Heart right ventricle (tissue), 16 donors: ENCODE measurements at regions of chr12 and their contacts with region 1.

Region 1: DNA sequence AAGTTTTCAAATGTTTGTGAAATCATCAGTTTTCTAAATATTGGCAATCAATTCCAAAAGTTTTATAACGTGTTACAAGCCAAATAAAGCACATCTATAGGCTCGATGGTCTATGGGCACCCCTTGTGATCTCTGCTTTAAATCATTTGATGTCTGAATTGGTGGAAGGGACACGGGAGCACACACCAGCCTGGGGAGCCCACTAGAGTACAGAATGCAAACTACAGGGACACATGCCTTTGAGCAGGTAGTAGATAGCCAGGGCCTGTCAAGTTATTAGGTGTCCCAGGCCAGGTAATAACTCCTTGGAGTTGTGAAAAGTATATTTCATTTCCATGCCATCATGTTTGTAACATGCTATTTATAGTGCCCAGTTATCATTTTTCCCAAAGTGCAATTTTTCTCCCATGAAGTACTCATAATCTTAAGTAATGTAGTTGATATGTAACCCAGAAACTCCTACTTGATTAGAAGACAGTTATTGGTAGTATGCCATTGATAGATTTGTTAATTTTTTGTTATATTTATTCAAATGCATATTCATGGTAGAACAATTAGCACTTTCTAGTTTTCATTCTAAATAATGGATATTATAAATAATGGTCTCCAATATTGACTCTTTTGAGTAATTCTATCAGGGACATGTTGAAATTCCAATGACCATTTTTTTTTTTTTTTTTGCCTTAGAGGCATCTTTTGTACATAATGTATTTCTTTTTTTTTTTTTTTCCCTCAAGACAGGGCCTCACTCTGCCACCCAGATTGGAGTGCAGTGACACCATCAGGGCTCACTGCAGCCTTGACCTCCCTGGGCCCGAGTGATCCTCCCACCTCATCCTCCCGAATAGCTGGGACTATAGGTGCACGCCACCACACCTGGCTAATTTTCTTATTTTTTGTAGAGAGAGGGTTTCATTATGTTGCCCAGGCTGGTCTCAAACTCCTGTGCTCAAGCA is 96.9 kb upstream of the FGD4 start:
- DNase-seq: no peak
- ATAC-seq: peak in 7 of 8 donors; percentile 52 to 73 (median 61)
- H3K4me3 ChIP-seq: no peak overlapping the region
- H3K27ac ChIP-seq: no peak overlapping the region
- H3K4me1 ChIP-seq: peaks cover 0 to 5% (median 0%) of the 10 kb centered on the region in 9 donors
- H3K27me3 ChIP-seq: no peaks in the 10 kb centered on the region
- CTCF ChIP-seq: peak in 7 of 9 donors; percentile 15 to 62 (median 45)

Region 2: DNA sequence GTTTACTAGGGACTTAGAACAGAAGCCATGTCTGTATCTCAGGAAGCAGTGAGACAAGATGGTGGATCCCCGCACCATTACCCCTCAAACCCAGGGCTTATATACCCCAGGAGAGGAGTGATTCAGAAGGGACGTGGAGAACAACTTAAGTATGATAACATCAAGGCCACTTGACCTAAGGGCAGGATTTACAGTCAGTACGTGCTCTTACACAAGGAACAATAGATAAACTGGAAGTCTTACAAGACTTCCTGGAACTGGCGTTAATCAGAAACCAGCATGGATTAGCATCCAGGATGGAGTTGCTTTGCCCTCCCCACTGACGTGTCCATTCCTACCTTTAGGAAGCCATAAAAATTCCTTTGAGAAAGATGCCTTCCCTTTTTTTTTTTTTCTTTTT is 651.6 kb before region 1 on chr12:
- intact Hi-C with region 1: loop called in 2 of 10 experiments (anchors 5 kb)
- DNase-seq: no peak
- ATAC-seq: peak in 5 of 8 donors; percentile 32 to 67 (median 47)
- H3K4me3 ChIP-seq: no peak overlapping the region
- H3K27ac ChIP-seq: peak overlapping the region in 5 of 10 donors; percentile 2 to 60 (median 25)
- H3K4me1 ChIP-seq: peaks cover 0 to 25% (median 10%) of the 10 kb centered on the region in 9 donors
- H3K27me3 ChIP-seq: no peaks in the 10 kb centered on the region
- CTCF ChIP-seq: no peak

Region 3: DNA sequence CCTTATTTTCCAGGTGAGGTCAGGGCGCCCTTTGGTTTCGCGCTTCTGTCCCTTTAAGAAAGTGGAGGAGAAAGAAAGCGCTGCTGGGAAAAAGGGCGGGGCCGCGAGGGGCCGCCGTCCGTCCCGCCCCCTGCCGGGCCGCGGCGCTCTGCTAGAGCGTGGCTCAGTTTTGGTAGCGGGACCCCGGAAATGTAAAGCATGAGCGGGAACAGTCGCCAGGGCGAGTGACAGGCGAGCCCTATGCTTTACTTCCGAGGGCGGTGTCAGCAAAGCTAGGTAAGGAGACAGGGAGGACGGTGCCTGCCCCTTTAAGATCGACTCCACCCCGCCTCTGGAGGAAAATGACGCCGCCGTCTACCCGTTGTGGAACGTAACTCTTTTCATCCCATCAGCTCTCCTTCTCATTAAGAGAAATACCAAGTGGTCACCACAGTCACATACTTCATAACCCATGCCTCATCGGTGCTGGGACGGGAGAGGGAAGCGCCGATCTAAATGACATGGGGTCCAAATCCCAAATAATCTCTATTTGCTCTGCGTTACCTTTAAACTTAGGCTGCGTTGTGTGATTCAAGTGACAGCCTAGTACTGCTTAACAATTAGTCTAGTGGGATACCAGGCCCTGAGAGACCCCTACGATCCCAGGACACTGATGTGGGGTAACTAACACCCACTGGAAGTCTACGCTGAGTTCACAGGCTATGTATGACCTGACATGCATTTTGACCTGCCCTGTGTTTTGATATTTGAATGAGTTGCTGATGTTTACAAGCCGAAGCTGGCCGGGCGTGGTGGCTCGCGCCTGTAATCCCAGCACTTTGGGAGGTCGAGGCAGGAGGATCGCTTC is 643.2 kb before region 1 on chr12 and contains the start of gene ETFBKMT:
- intact Hi-C with region 1: loop called in 2 of 10 experiments (anchors 5 kb)
- DNase-seq: peak; percentile 84 to 89
- ATAC-seq: peak; percentile 93 to 97 (median 96)
- H3K4me3 ChIP-seq: peak within 1 kb of the TSS; percentile 30 to 78 (median 67)
- H3K27ac ChIP-seq: peak within 1 kb of the TSS; percentile 83 to 98 (median 94)
- H3K4me1 ChIP-seq: peaks cover 0 to 19% (median 11%) of the 10 kb centered on the region in 9 donors
- H3K27me3 ChIP-seq: no peaks in the 10 kb centered on the region
- CTCF ChIP-seq: peak in 8 of 9 donors; percentile 23 to 74 (median 50)
- total RNA-seq, gene ETFBKMT: 5.5 to 8.7 (median 6.2) TPM

Region 4: DNA sequence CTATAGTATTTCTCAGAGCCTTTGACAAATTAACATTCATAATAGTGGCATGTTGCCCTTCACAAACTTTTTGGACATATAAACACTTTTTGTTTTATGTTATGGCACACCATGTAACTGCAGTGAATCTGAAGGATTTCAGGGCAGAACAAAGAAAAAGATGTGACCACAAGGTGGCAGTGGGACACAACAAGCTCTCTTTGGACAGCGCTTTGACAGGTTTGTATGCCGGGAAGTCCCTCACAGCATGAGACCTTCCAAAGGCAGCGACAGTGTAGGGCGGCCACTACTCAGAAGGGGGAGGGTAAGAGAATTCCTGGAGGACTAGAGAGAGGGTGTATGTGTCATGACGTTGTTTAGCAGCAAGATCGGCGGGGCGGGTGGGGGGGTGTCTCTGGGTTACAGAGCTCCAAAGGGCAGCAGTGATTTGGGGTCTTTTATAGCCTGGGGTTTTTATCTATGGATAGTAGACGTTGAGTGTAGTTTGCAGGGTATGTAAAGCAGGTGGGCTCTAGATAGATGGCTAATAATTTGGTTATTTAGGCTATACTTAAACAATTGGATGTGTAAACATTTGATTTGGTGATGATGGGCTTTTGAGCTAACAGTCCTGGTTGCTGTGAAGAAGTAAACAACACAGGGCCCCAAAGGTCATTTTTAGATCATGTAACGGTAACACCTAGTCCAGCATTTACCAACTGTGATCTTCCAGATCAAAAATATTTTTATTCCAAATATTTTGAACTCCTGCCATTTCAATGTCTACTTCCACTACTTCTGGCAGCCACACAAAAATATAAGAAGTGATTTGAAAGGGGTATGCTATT is 620.1 kb before region 1 on chr12:
- intact Hi-C with region 1: loop called in 5 of 10 experiments (anchors 5 to 10 kb)
- DNase-seq: peak; percentile 17 to 50
- ATAC-seq: peak; percentile 64 to 89 (median 78)
- H3K4me3 ChIP-seq: no peak overlapping the region
- H3K27ac ChIP-seq: peak overlapping the region in 1 of 10 donors; percentile 16
- H3K4me1 ChIP-seq: peaks cover 0 to 10% (median 0%) of the 10 kb centered on the region in 9 donors
- H3K27me3 ChIP-seq: no peaks in the 10 kb centered on the region
- CTCF ChIP-seq: peak; percentile 22 to 82 (median 65)

Region 5: DNA sequence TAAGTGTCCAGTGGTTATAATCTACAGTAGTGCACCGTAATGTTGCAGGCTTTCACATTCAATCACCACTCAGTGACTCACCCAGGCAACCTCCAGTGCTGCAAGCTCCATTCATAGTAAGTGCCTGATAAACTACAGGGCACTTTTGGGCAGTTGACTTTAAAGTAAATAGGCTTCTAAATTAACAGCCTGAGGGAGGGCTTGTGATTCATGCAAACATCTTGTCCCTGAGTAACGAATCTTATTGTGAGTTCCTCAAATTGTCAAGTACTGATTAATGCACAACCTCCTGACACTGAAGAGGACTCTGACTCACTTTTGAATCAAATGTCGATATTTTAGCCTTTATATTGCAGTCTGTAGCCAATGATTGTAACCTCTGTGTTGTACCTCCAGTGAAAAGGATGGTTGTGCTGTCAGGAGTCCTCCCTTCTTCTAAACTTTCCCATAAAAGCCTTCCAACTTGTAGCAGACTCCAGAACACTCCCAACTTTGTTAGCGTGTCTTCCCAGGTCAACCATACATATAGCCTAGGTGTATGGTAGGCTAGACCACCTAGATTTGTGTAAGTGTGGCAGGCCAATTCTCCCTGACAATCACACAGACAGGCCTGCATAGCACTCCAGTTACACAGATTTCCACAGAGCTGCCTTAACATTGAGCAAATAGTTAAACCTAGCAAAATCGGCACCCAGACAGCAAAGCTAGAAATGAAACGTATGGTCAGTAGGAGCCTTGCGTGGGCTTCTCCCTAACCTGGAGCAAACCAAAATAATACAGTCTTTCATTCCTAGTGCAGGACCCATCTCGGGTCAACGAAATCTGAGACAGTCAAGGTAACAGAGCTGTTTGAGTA is 250.7 kb before region 1 on chr12:
- intact Hi-C with region 1: loop called in 1 of 10 experiments (anchors 5 kb)
- DNase-seq: no peak
- ATAC-seq: peak in 7 of 8 donors; percentile 16 to 94 (median 84)
- H3K4me3 ChIP-seq: no peak overlapping the region
- H3K27ac ChIP-seq: peak overlapping the region in 1 of 10 donors; percentile 18
- H3K4me1 ChIP-seq: peaks cover 0 to 14% (median 4%) of the 10 kb centered on the region in 9 donors
- H3K27me3 ChIP-seq: no peaks in the 10 kb centered on the region
- CTCF ChIP-seq: no peak

Region 6: GRCh38 chr12:32062881-32063280 is 239.6 kb before region 1 on chr12:
- intact Hi-C with region 1: loop called in 7 of 10 experiments (anchors 2 to 10 kb)
- DNase-seq: no peak
- ATAC-seq: no peak
- H3K4me3 ChIP-seq: no peak overlapping the region
- H3K27ac ChIP-seq: no peak overlapping the region
- H3K4me1 ChIP-seq: peaks cover 0 to 3% (median 0%) of the 10 kb centered on the region in 9 donors
- H3K27me3 ChIP-seq: no peaks in the 10 kb centered on the region
- CTCF ChIP-seq: no peak

Region 7: GRCh38 chr12:32069071-32069470 is 233.4 kb before region 1 on chr12:
- intact Hi-C with region 1: loop called in 5 of 10 experiments (anchors 5 to 10 kb)
- DNase-seq: no peak
- ATAC-seq: no peak
- H3K4me3 ChIP-seq: no peak overlapping the region
- H3K27ac ChIP-seq: no peak overlapping the region
- H3K4me1 ChIP-seq: no peaks in the 10 kb centered on the region
- H3K27me3 ChIP-seq: no peaks in the 10 kb centered on the region
- CTCF ChIP-seq: no peak